Left colon (tissue), 2 donors: ENCODE measurements at regions of chr6 and their contacts with region 1.

Region 1: GRCh38 chr6:31356946-31357466 is at the start of gene HLA-B:
- DNase-seq: peak; percentile 94 to 98
- ATAC-seq: peak; percentile 93
- total RNA-seq, gene HLA-B: 1,508 to 2,239 TPM

Region 2: GRCh38 chr6:31271641-31272357 is 85.2 kb before region 1 on chr6 and contains the start of gene HLA-C:
- intact Hi-C with region 1: loop called in 1 of 2 experiments (anchors 10 kb)
- DNase-seq: peak; percentile 93 to 96
- ATAC-seq: peak; percentile 93
- total RNA-seq, gene HLA-C: 1,163 to 1,296 TPM